HEK293 (cell line): ENCODE measurements at regions of chr12 and their contacts with region 1.

Region 1: GRCh38 chr12:124740691-124741137 is 123.0 kb downstream of the SCARB1 start:
- H3K4me3 ChIP-seq: no peak overlapping the region
- H3K27ac ChIP-seq: no peak overlapping the region; the same call in 1 of the 2 replicates
- H3K4me1 ChIP-seq: peaks cover 2% of the 10 kb centered on the region; the same call in 1 of the 2 replicates
- CTCF ChIP-seq: no peak

Region 2: DNA sequence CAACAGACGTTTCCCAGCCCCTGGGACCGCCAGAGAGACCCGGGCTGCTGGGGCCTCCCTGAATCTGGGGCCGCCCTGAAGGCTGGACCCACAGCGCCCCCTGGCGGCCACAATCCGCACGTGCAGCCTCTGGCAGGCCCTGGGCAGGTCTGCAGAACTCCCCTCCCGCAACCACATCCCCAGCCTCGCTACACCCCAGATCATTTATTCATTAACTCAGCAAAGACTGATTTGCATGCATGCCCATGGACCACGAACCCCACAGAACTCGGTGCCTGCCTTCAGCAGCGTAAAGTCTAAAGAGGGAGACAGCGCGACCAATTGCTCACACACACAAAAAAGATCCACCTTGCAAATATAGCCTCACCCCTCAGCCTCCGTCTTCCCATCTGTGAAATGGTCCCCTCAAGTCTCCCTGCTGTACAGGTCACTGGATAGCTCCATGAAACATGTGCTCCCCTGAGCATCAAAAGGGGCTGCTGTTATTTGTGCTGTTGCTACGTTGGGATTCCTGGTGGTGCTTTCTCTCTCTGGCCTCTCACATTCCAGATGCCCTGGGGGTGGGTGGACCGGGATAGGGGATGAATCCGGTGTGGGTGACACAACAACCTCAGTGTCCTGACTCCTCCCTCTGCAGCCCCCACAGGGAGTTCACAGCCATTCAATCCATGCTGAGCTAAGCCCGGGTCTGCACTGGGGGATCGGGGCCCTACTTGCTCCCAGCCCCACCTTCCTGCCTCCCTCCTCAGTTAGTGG is 26.5 kb after region 1 on chr12:
- CTCF ChIA-PET with region 1: interaction called, 17 read pairs
- POLR2A ChIA-PET with region 1: no interaction called
- H3K4me3 ChIP-seq: no peak overlapping the region
- H3K27ac ChIP-seq: no peak overlapping the region
- H3K4me1 ChIP-seq: no peaks in the 10 kb centered on the region
- CTCF ChIP-seq: peak; percentile 89